SK-N-SH (cell line): ENCODE measurements at regions of chr9 and their contacts with region 1.

Region 1: GRCh38 chr9:96566498-96567207 is 53.0 kb downstream of the CDC14B start:
- DNase-seq: peak; percentile 89
- H3K4me3 ChIP-seq: peak overlapping the region; percentile 67 to 78
- H3K27ac ChIP-seq: peak overlapping the region; percentile 47 to 49
- H3K4me1 ChIP-seq: peaks cover 7% of the 10 kb centered on the region in 2 experiments; a peak in 2 of 4 replicates
- H3K27me3 ChIP-seq: no peaks in the 10 kb centered on the region
- CTCF ChIP-seq: peak; percentile 63
- EP300 ChIP-seq: no peak
- RAD21 ChIP-seq: peak; percentile 44

Region 2: GRCh38 chr9:96555567-96556386 is 10.9 kb before region 1 on chr9:
- CTCF ChIA-PET with region 1: interaction called, 21 read pairs
- POLR2A ChIA-PET with region 1: no interaction called
- DNase-seq: no peak
- H3K4me3 ChIP-seq: no peak overlapping the region
- H3K27ac ChIP-seq: peak overlapping the region; percentile 47 to 95
- H3K4me1 ChIP-seq: peaks cover 8 to 26% of the 10 kb centered on the region in 2 experiments; a peak in 3 of 4 replicates
- H3K27me3 ChIP-seq: no peaks in the 10 kb centered on the region
- CTCF ChIP-seq: no peak
- EP300 ChIP-seq: no peak
- RAD21 ChIP-seq: no peak